Activated naive CD4-positive, alpha-beta T cell treated with anti-CD3 and anti-CD28 coated beads for 36 hours (primary cell): ENCODE measurements at regions of chr18 and their contacts with region 1.

Region 1: DNA sequence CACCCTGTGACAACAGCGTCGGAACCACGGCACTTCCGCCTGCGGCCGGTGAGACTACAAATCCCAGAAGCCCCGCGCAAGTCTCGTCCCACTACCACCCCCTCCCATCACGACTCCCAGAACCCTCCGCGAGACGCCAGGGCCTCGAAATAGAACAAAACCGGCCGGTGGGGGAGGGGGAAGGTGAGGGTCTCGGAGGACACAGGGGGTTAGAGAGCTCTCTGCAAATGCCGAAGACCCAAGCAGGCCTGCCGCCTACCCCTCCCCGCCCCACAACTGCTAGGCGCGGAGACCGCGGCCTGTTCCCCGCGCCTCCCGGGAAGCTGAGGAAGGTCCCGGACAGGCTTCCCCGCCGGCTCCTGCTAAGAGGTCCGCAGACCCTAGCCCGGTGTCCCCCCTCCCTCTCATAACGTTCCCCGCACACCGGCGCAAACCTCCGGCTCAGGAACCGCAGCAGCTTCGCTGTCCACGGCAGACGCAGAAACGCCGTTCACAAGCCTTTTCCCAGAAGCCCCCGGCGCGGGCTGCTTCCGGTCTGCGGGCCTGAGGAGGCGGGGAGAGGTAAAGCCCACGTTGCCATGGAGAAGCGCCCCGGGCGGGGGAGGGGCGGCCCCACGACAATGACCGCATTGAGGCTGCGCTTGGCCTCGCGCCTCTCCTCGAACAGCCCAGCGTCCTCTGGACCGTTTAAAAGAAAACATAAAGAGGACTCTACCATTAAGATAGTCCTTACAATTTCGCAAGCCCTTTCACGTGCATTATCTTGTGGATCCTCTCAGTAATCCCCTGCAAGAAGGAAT is at the start of gene ZNF24:
- DNase-seq: peak; percentile 94
- H3K4me3 Mint-ChIP-seq: peak within 1 kb of the TSS; percentile 92
- H3K27ac Mint-ChIP-seq: peak within 1 kb of the TSS; percentile 92
- H3K4me1 Mint-ChIP-seq: peaks cover 43% of the 10 kb centered on the region
- H3K27me3 Mint-ChIP-seq: no peaks in the 10 kb centered on the region
- total RNA-seq, gene ZNF24: 46.8 to 47.8 TPM

Region 2: GRCh38 chr18:35231052-35231451 is 113.1 kb before region 1 on chr18:
- CTCF ChIA-PET with region 1: interaction called, 8 read pairs
- intact Hi-C with region 1: loop called (anchors 1 kb)
- DNase-seq: peak; percentile 88
- H3K4me3 Mint-ChIP-seq: peak overlapping the region; percentile 56
- H3K27ac Mint-ChIP-seq: no peak overlapping the region
- H3K4me1 Mint-ChIP-seq: peaks cover 3% of the 10 kb centered on the region
- H3K27me3 Mint-ChIP-seq: peaks cover 3% of the 10 kb centered on the region

Region 3: DNA sequence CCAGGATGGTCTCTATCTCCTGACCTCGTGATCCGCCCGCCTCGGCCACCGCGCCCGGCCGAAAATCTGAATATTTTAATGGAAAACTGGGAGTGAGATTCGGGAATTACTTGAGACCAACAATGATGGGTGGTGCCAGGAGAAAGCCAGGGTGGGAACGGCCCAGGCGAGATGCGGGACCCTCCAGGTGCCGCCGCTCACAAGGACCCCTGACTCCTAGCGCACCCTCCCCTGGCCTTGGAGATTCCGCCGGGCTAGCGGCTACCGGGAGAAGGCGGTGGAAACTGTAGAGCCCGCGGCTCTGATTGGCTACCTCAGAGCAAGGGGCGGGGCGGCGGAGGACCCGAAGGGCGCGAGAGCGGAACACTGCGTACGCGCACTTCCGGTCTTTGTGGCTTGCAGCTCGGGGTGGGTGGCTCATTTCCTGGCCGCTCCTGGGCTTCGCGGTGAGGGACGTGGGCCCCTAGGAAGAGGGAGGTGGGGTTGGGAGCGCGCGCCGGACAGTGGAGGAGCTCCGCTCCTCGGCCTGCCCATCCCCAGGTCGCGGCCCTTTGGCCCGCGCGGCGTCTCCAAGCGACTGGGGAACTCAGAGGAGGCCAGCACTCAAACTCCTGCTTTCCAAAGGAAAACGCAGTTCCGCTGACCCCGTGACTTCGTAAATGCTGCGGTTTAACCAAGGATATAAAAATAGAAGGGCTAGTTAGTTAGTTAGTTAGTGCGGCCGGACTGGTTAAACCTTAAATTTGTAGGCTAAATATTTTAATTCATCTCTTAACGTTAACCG is 103.3 kb before region 1 on chr18 and contains the start of gene ZNF397:
- CTCF ChIA-PET with region 1: no interaction called
- intact Hi-C with region 1: loop called (anchors 1 kb)
- DNase-seq: peak; percentile 98
- H3K4me3 Mint-ChIP-seq: peak within 1 kb of the TSS; percentile 94
- H3K27ac Mint-ChIP-seq: peak within 1 kb of the TSS; percentile 99
- H3K4me1 Mint-ChIP-seq: peaks cover 38% of the 10 kb centered on the region
- H3K27me3 Mint-ChIP-seq: no peaks in the 10 kb centered on the region
- total RNA-seq, gene ZNF397: 22.6 to 23.2 TPM

Region 4: GRCh38 chr18:35290073-35290735 is 53.9 kb before region 1 on chr18 and contains the start of gene ZSCAN30:
- CTCF ChIA-PET with region 1: no interaction called
- intact Hi-C with region 1: loop called (anchors 1 kb)
- DNase-seq: peak; percentile 96
- H3K4me3 Mint-ChIP-seq: peak within 1 kb of the TSS; percentile 96
- H3K27ac Mint-ChIP-seq: peak within 1 kb of the TSS; percentile 97
- H3K4me1 Mint-ChIP-seq: peaks cover 48% of the 10 kb centered on the region
- H3K27me3 Mint-ChIP-seq: peaks cover 2% of the 10 kb centered on the region
- total RNA-seq, gene ZSCAN30: 12.0 to 14.3 TPM

Region 5: GRCh38 chr18:35376742-35377695 is 32.9 kb after region 1 on chr18 and contains the start of gene ZNF396:
- CTCF ChIA-PET with region 1: no interaction called
- intact Hi-C with region 1: loop called (anchors 1 kb)
- DNase-seq: peak; percentile 83
- H3K4me3 Mint-ChIP-seq: peak within 1 kb of the TSS; percentile 79
- H3K27ac Mint-ChIP-seq: peak within 1 kb of the TSS; percentile 13
- H3K4me1 Mint-ChIP-seq: peaks cover 6% of the 10 kb centered on the region
- H3K27me3 Mint-ChIP-seq: no peaks in the 10 kb centered on the region
- total RNA-seq, gene ZNF396: 0.74 to 0.77 TPM